ENCODE measurements at regions of chr5 and their contacts with region 1.

Region 1: GRCh38 chr5:111278845-111279504 is 54.8 kb downstream of the CAMK4 start:
- DNase-seq: no peak
- ATAC-seq: no peak
- H3K4me3 ChIP-seq: no peak overlapping the region
- H3K27ac ChIP-seq: no peak overlapping the region
- H3K4me1 ChIP-seq: no peaks in the 10 kb centered on the region
- H3K27me3 ChIP-seq: no peaks in the 10 kb centered on the region
- CTCF ChIP-seq: peak in 3 of 5 experiments; percentile 23 to 48 (median 38)
- POLR2A ChIP-seq: no peak

Region 2: DNA sequence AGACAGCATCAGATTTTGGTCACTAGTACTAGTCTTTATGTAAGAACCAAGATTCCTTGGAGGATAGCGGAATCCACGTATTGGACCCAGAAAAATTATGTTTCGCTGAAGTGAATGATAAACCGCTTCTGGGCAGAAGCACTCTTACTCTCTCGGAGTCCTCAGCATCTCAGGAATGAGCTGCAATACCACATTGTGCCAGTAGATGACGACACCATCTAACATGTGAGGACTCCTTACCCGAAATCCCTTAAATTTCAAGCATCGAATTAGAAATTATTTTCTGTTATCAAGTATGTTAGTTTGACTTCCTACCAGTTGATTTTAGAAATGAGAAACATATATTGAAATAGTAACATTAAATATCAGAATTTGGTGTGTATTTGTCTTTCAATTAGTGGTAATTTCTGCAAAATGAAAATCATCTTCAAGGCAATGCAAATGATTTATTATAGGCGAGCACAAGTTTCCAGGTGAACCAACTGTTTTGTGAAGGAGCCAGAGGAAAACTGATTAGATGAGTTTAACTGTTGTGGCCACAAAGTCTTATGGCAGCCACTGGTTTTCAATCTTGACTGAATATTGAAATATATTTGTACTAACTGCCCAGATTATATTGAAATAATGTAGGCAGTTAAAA is 120.8 kb before region 1 on chr5:
- in situ Hi-C with region 1: no loop called
- intact Hi-C with region 1: loop called (anchors 10 kb)
- DNase-seq: peak; percentile 5 to 16
- ATAC-seq: no peak
- H3K4me3 ChIP-seq: no peak overlapping the region
- H3K27ac ChIP-seq: no peak overlapping the region
- H3K4me1 ChIP-seq: no peaks in the 10 kb centered on the region
- H3K27me3 ChIP-seq: no peaks in the 10 kb centered on the region
- CTCF ChIP-seq: peak; percentile 72 to 93 (median 78)
- POLR2A ChIP-seq: no peak

Region 3: GRCh38 chr5:111313017-111313724 is 34.2 kb after region 1 on chr5:
- in situ Hi-C with region 1: no loop called
- intact Hi-C with region 1: no loop called
- DNase-seq: no peak
- ATAC-seq: no peak
- H3K4me3 ChIP-seq: no peak overlapping the region
- H3K27ac ChIP-seq: no peak overlapping the region
- H3K4me1 ChIP-seq: no peaks in the 10 kb centered on the region
- H3K27me3 ChIP-seq: no peaks in the 10 kb centered on the region
- CTCF ChIP-seq: no peak
- POLR2A ChIP-seq: no peak

Measured in gastrocnemius medialis (tissue), 4 donors.